PC-3 (cell line): ENCODE measurements at regions of chr13 and their contacts with region 1.

Region 1: GRCh38 chr13:97221989-97222700 is at the start of gene MBNL2:
- DNase-seq: peak; percentile 87
- ATAC-seq: peak; percentile 95
- H3K4me3 ChIP-seq: peak within 1 kb of the TSS; percentile 92
- H3K27ac ChIP-seq: peak within 1 kb of the TSS; percentile 70
- H3K4me1 ChIP-seq: peaks cover 37% of the 10 kb centered on the region
- H3K27me3 ChIP-seq: no peaks in the 10 kb centered on the region
- CTCF ChIP-seq: no peak
- total RNA-seq, gene MBNL2: 10.3 and 17.8 TPM in 2 replicates

Region 2: DNA sequence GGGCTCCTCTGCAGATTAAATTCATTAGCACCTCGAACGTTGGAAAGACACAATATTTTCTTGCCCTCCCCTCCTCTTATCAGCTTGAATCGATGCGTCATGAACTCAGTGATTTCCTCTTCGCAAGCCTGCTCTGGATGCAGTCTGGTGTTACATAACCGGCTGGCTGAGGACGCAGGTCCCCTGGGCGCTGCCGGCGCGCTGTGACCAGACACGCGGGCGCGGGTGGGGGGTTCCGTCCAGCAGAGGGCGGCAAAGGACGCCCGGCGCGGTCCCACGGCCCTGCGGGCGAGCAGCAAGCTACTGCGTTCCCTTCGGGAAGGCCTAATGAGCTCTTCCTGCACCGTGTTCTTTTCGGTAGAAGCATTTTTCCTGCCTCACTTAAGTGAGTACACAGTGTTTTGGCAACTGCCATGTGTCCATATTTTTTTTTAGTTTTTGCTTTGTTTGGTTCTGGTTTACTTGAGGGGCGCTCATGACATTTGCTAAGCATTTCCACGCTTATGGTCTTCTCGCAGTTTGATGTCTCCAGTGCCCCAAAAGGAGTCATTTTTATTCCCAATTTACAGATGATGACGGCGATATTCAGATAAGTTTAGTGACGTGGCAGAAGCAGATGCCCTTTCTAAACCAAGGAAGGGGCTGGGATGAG is 112.2 kb before region 1 on chr13:
- CTCF ChIA-PET with region 1: interaction called, 12 read pairs
- POLR2A ChIA-PET with region 1: interaction called, 6 read pairs
- intact Hi-C with region 1: no loop called
- DNase-seq: peak; percentile 82
- ATAC-seq: peak; percentile 94
- H3K4me3 ChIP-seq: no peak overlapping the region
- H3K27ac ChIP-seq: no peak overlapping the region
- H3K4me1 ChIP-seq: peaks cover 12% of the 10 kb centered on the region
- H3K27me3 ChIP-seq: no peaks in the 10 kb centered on the region
- CTCF ChIP-seq: peak; percentile 88

Region 3: GRCh38 chr13:97141564-97142005 is 80.6 kb before region 1 on chr13:
- CTCF ChIA-PET with region 1: interaction called, 15 read pairs
- POLR2A ChIA-PET with region 1: interaction called, 6 read pairs
- intact Hi-C with region 1: no loop called
- DNase-seq: peak; percentile 92
- ATAC-seq: peak; percentile 99
- H3K4me3 ChIP-seq: peak overlapping the region; percentile 29
- H3K27ac ChIP-seq: peak overlapping the region; percentile 73
- H3K4me1 ChIP-seq: peaks cover 25% of the 10 kb centered on the region
- H3K27me3 ChIP-seq: no peaks in the 10 kb centered on the region
- CTCF ChIP-seq: no peak

Region 4: GRCh38 chr13:97295283-97296182 is 73.4 kb after region 1 on chr13:
- CTCF ChIA-PET with region 1: no interaction called
- POLR2A ChIA-PET with region 1: interaction called, 4 read pairs
- intact Hi-C with region 1: loop called (anchors 1 kb)
- DNase-seq: peak; percentile 92
- ATAC-seq: peak; percentile 85
- H3K4me3 ChIP-seq: peak overlapping the region; percentile 36; the same call in 1 of the 2 replicates
- H3K27ac ChIP-seq: peak overlapping the region; percentile 99
- H3K4me1 ChIP-seq: peaks cover 32% of the 10 kb centered on the region
- H3K27me3 ChIP-seq: no peaks in the 10 kb centered on the region
- CTCF ChIP-seq: no peak

Region 5: GRCh38 chr13:97359181-97360057 is 137.3 kb after region 1 on chr13:
- CTCF ChIA-PET with region 1: no interaction called
- POLR2A ChIA-PET with region 1: no interaction called
- intact Hi-C with region 1: loop called (anchors 5 kb)
- DNase-seq: peak; percentile 68
- ATAC-seq: peak; percentile 81
- H3K4me3 ChIP-seq: no peak overlapping the region
- H3K27ac ChIP-seq: no peak overlapping the region
- H3K4me1 ChIP-seq: no peaks in the 10 kb centered on the region
- H3K27me3 ChIP-seq: no peaks in the 10 kb centered on the region
- CTCF ChIP-seq: peak; percentile 88